Upper lobe of right lung (tissue), 1 donor: ENCODE measurements at regions of chr2 and their contacts with region 1.

Region 1: DNA sequence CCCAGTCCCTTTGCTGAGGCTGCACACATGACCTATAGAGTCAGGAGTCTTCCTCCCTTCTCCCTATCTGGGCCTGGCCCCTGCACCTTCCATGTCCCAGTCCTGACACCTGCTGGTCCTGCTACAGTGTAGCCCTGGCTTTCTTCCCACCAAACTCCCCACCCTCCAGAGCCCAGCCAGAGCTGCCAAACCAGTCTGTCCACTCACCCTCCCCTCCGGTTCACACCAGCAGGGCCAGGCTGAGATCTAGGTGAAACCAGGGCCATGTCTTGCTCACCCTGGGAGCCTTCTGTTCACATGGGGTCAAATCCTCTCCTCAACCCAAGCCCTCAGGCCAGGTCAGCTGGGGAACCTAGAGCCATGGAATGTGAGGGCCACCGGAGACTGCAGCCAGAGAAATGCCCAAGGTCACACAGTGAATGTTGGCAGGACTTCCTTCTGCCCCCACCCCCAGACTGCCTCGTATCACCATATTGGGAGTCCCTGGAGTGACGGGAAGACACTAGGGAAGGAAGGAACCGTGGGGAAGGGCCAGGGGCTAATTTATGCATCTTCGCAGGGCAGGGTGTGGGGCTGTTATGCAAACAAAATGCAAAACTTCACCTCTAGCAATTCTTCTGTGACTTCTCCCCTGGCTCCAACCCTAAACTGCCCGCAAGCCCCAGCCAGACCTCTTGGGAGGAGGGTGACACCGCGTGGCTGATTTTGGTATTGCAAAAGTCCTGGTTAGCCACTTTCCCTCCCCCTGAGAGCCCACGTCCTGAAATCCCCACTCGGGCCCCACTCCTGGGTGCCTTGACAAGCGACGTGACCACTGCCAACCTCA is 14.6 kb downstream of the TNS1 start:
- DNase-seq: peak; percentile 93
- ATAC-seq: peak; percentile 90
- H3K4me3 ChIP-seq: no peak overlapping the region
- H3K27ac ChIP-seq: peak overlapping the region; percentile 71
- H3K4me1 ChIP-seq: peaks cover 22% of the 10 kb centered on the region
- H3K27me3 ChIP-seq: no peaks in the 10 kb centered on the region
- CTCF ChIP-seq: peak; percentile 86

Region 2: DNA sequence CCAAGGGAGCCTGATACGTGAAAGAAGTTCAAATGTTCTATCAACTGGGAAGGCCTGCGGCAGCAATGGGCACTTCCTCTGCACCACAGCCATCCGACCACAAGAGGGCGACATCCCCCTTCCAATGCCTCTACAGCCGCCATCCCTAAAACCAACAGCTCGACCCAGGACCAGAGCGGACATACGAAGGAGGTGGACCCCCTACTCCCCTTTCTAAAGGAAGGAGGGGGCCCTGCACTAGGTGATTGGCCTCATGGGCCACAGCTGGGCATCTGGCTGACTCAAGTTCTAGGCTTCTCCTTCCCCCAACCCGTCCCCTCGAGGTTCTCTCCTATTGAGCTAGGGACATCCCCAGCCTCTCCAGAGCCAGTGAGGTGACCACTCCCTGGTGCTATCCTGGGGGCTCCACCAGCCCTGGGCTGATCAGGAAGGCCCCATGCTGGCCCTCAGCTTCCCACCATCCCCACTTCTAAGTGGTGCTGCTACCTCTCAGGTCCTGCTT is 202.6 kb before region 1 on chr2:
- intact Hi-C with region 1: loop called (anchors 5 kb)
- DNase-seq: peak; percentile 86
- ATAC-seq: peak; percentile 89
- H3K4me3 ChIP-seq: no peak overlapping the region
- H3K27ac ChIP-seq: no peak overlapping the region
- H3K4me1 ChIP-seq: peaks cover 11% of the 10 kb centered on the region
- H3K27me3 ChIP-seq: no peaks in the 10 kb centered on the region
- CTCF ChIP-seq: peak; percentile 94

Region 3: GRCh38 chr2:217934321-217935131 is 53.7 kb before region 1 on chr2:
- intact Hi-C with region 1: loop called (anchors 10 kb)
- DNase-seq: no peak
- ATAC-seq: peak; percentile 50
- H3K4me3 ChIP-seq: peak overlapping the region; percentile 38
- H3K27ac ChIP-seq: peak overlapping the region; percentile 91
- H3K4me1 ChIP-seq: peaks cover 97% of the 10 kb centered on the region
- H3K27me3 ChIP-seq: no peaks in the 10 kb centered on the region
- CTCF ChIP-seq: no peak

Region 4: DNA sequence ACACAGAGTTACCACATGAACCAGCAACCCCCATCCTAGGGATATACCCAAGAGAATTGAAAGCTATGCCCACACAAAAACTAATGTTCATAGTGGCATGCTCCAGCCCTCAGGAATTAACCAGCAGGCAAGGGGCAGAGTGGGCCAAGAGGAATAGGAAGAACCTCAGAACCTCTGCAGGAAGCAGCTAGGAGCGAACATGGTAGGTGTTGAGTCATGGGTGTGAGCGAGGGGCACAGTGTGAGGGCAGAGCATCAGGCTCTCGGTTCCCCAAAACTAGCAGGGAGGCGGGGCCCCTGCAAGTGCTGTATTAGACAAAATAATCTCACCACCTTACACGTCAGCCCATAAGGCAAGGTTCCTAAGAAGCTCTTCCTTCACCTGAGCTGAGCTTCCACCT is 75.3 kb after region 1 on chr2:
- intact Hi-C with region 1: no loop called
- DNase-seq: no peak
- ATAC-seq: peak; percentile 65
- H3K4me3 ChIP-seq: no peak overlapping the region
- H3K27ac ChIP-seq: no peak overlapping the region
- H3K4me1 ChIP-seq: no peaks in the 10 kb centered on the region
- H3K27me3 ChIP-seq: no peaks in the 10 kb centered on the region
- CTCF ChIP-seq: no peak